Dorsolateral prefrontal cortex (tissue), 120 donors: ENCODE measurements at regions of chr19 and their contacts with region 1.

Region 1: DNA sequence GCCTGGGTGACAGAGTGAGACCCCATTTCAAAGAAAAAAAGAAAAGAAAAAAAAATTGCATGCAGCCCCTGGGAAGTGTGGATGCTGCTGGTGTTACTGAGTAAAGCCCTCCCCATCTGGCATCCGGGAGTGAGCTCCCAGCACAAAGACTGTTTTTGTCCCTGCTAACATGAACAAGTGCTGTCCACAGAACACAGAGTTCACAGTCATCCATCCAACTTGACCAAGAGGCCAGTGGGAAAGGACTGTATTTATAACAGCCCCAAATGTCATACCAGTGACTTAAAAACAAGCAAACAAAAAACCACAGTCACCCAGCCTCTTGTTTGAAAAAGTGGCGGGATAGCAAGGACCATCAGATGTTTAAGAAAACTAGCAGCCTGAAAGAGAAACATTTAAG is 10.8 kb downstream of the FBXO17 start:
- DNase-seq: no peak
- H3K4me3 ChIP-seq: no peak overlapping the region
- H3K27ac ChIP-seq: peak overlapping the region in 19 of 59 donors; percentile 6 to 71 (median 47)
- H3K27me3 ChIP-seq: no peaks in the 10 kb centered on the region
- CTCF ChIP-seq: no peak

Region 2: DNA sequence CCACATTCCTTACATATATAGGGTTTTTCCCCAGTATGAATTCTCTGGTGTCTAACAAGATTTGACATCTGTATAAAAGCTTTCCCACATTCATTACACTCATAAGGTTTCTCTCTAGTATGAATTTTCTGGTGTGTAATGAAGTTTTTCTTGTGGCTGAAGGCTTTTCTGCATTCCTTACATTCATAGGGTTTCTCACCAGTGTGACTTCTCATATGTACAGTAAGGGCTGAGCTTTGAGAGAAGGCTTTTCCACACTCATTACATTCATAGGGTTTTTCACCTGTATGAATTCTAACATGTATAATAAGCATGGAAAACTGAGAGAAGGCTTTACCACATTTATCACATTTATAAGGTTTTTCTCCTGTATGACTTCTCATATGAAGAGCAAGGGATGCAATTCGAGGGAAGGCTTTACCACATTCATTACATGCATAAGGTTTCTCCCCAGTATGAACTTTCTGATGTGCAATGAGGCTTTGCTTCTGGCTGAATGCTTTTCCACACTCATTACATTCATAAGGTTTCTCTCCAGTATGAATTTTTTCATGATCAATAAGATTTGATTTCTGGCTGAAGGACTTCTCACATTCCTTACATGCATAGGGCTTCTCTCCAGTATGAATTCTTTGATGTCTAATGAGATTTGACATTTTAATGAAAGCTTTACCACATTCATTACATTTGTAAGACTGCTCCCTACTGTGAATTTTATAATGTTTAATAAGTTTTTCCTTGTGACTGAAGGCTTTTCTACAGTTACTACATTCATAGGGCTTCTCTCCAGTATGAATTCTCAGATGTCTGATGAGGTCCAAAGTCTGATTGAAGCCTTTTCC is 1551.3 kb before region 1 on chr19:
- intact Hi-C with region 1: no loop called
- DNase-seq: no peak
- H3K4me3 ChIP-seq: no peak overlapping the region
- H3K27ac ChIP-seq: no peak overlapping the region
- H3K27me3 ChIP-seq: no peaks in the 10 kb centered on the region
- CTCF ChIP-seq: no peak

Region 3: GRCh38 chr19:38838573-38839269 is 126.0 kb before region 1 on chr19:
- intact Hi-C with region 1: no loop called
- DNase-seq: no peak
- H3K4me3 ChIP-seq: no peak overlapping the region
- H3K27ac ChIP-seq: peak overlapping the region in 3 of 59 donors; percentile 11 to 31 (median 13)
- H3K27me3 ChIP-seq: no peaks in the 10 kb centered on the region
- CTCF ChIP-seq: no peak

Region 4: DNA sequence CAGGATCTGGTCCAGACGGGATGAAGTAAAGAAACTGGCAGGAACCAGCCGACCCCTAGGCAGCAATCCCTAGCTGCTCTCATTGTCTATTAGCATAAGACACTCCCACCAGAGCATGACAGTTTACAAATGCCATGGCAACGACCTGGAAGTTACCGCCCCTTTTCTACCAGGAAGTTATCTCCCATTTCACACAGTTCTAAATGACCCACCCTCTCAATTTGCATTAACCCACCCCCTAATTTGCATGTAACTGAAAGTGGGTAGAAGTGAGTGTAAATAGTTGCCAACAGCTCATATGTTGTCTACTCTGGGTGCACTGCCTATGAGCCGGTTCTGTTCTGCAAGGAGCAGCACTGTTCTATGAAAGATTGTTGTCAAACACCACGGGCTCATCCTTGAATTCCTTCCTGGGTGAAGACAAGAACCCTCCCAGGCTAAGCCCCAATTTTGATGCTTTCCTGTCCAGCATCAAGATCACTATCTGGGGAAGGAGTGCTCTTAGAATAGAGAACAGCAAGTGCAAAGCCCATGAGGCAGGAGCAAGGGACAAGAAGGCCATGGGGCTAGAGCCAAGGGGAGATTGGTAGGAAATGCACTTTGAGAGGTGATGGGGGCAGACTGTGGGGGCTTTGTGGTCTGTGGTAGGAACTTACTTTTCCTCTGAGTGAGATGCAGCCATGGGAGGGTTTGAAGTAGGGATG is 81.5 kb after region 1 on chr19:
- intact Hi-C with region 1: loop called in 1 of 2 experiments (anchors 5 kb)
- DNase-seq: no peak
- H3K4me3 ChIP-seq: no peak overlapping the region
- H3K27ac ChIP-seq: no peak overlapping the region
- H3K27me3 ChIP-seq: no peaks in the 10 kb centered on the region
- CTCF ChIP-seq: no peak

Region 5: DNA sequence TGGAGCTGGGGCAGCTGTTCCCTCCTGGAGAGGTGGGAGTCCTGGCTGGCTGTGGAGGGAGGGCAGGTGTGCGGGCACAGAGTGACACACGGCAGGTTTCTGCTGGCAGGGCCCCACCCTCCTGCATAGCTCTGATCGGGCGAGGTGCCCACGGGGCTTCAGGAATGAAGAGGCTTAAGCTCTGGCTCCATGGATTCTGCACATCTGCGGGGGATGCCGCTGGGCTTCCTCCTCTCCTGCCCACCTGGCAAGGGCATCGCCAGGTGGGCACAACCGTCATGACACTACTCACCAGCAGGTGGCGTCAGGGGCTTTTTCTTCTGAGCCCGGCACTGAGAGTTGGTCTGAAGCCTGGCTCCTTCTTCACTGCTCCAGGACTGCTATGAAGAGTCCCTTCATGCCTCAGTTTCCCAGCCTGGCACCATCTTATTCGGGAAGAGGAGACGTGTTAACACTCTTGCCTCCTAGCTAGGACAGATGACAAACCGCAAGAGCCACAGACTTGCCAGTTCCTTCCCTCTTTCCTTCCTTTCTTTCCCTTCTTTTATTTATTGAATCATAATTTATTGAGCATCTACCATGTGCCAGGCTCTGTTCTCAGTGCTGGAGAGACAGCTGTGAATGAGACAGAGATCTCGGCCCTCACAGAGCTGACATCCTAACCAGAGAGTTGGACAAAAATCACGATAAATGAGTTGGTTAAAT is 145.7 kb after region 1 on chr19:
- intact Hi-C with region 1: loop called in 1 of 2 experiments (anchors 5 kb)
- DNase-seq: peak in 9 of 10 donors; percentile 64 to 86 (median 68)
- H3K4me3 ChIP-seq: no peak overlapping the region
- H3K27ac ChIP-seq: peak overlapping the region in 43 of 59 donors; percentile 3 to 94 (median 64)
- H3K27me3 ChIP-seq: no peaks in the 10 kb centered on the region
- CTCF ChIP-seq: peak; percentile 57 to 92 (median 83)

Region 6: GRCh38 chr19:39187559-39187957 is 222.8 kb after region 1 on chr19:
- intact Hi-C with region 1: loop called in 1 of 2 experiments (anchors 5 kb)
- DNase-seq: no peak
- H3K4me3 ChIP-seq: no peak overlapping the region
- H3K27ac ChIP-seq: no peak overlapping the region
- H3K27me3 ChIP-seq: no peaks in the 10 kb centered on the region
- CTCF ChIP-seq: peak in 14 of 56 donors; percentile 0 to 40 (median 8)

Region 7: GRCh38 chr19:39328046-39328705 is 363.4 kb after region 1 on chr19:
- intact Hi-C with region 1: loop called (anchors 2 to 5 kb)
- DNase-seq: peak; percentile 82 to 94 (median 91)
- H3K4me3 ChIP-seq: peak overlapping the region in 2 of 59 donors; percentile 1 to 11
- H3K27ac ChIP-seq: peak overlapping the region in 3 of 59 donors; percentile 12 to 53 (median 28)
- H3K27me3 ChIP-seq: no peaks in the 10 kb centered on the region
- CTCF ChIP-seq: peak; percentile 77 to 99 (median 96)